ENCODE measurements at regions of chr4 and their contacts with region 1.

Region 1: GRCh38 chr4:143667461-143667860 is 33.0 kb downstream of the FREM3 start:
- DNase-seq: no peak
- H3K4me3 ChIP-seq: no peak overlapping the region
- H3K27ac ChIP-seq: no peak overlapping the region
- H3K4me1 ChIP-seq: no peaks in the 10 kb centered on the region
- H3K27me3 ChIP-seq: no peaks in the 10 kb centered on the region
- CTCF ChIP-seq: no peak
- EP300 ChIP-seq: no peak
- POLR2A ChIP-seq: no peak

Region 2: GRCh38 chr4:143599827-143600226 is 67.6 kb before region 1 on chr4:
- in situ Hi-C with region 1: no loop called
- intact Hi-C with region 1: loop called (anchors 2 kb)
- DNase-seq: no peak
- H3K4me3 ChIP-seq: no peak overlapping the region
- H3K27ac ChIP-seq: no peak overlapping the region
- H3K4me1 ChIP-seq: no peaks in the 10 kb centered on the region
- H3K27me3 ChIP-seq: no peaks in the 10 kb centered on the region
- CTCF ChIP-seq: no peak
- EP300 ChIP-seq: no peak
- POLR2A ChIP-seq: no peak

Measured in transverse colon (tissue), 4 donors.